ENCODE measurements at regions of chr16 and their contacts with region 1.

Region 1: GRCh38 chr16:2874912-2875362 is 8.1 kb upstream of the FLYWCH2 start:
- DNase-seq: peak; percentile 85
- CTCF ChIP-seq: peak; percentile 98

Region 2: DNA sequence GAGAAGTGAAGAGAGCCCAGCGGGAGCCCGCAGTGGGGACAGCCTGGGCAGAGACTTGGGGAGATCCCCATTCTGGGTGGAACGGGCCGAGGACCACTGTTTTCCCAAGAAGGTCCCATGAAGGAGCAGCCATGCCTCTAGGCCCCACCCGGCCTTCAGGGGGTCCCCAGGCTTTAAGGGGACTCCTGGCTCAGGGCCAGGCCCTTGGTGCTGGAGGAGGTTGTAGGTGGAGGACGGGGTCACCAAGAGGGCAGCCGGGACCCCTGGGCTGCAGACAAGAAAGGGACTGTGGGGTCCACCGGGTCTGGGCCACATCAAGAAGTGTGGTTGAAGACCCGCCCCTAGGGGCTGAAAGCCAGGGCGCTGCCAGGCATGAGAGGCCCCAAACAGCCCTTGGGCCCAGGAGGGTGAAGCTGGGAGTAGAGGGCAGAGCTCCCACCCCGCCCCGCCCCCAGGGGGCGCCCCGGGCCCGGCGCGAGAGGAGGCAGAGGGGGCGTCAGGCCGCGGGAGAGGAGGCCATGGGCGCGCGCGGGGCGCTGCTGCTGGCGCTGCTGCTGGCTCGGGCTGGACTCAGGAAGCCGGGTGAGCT is 58.1 kb before region 1 on chr16 and contains the start of gene PRSS21:
- CTCF ChIA-PET with region 1: no interaction called
- POLR2A ChIA-PET with region 1: no interaction called
- DNase-seq: no peak
- CTCF ChIP-seq: peak; percentile 28

Region 3: DNA sequence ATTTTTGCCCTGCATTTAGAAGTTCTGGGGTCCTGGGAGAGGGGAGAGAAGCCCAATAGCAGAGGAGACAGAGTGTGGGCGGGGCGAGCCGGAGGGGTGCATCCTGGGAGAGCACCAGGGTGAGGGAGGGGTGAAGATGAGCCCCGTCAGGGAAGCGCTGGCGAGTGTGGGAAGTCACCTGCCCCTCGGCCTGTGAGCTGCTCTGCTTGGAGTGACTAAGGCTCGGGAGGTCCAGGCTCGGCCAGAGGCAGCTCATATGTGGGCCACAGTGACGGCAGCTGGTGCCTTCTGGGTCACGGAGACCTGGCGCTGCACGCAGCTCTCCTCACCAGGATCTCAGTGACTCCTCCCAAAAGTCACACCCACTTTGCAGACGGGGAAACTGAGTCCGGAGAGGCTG is 43.7 kb before region 1 on chr16:
- CTCF ChIA-PET with region 1: no interaction called
- POLR2A ChIA-PET with region 1: no interaction called
- DNase-seq: no peak
- CTCF ChIP-seq: no peak

Region 4: DNA sequence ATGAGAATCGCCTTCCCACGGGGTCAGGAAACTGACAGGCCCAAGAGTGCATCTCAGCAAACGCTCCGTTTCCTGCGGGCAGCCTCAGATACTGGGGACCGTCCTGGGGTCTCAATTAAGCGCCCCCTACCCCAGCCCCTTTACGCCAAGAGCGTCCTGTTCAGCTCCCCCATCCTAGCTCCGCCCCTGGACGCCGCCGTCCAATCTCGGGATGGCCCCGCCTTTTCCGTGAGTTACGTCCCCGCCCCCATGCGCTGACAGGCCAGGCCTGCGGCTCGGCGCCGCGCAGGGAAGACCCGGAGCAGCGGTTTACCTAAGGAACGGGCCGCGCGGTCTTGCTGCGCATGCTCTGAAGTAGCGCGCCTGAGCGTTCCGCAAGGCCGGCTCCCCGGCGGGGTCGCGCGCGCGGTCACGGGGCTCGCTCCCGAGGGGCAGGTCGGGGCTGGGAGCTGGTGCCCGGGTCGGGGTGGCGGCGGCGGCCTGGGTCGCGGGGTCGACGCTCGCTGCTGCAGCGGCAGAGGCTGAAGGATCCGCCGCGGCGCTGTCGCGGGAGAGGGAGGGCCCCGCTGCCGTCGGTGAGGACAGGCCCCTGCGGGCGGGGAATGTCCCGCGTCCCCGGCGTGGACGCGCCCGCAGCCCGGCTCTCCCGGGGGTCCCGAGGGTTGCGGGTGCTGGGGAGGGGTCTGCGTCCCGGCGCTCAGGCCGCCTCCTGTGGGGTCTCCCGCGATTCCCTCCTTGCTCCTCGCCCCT is 36.8 kb after region 1 on chr16 and contains the start of gene FLYWCH1:
- CTCF ChIA-PET with region 1: interaction called, 11 read pairs
- POLR2A ChIA-PET with region 1: no interaction called
- DNase-seq: peak; percentile 96
- CTCF ChIP-seq: no peak

Region 5: GRCh38 chr16:2919511-2920255 is 44.7 kb after region 1 on chr16:
- CTCF ChIA-PET with region 1: interaction called, 12 read pairs
- POLR2A ChIA-PET with region 1: no interaction called
- DNase-seq: peak; percentile 60
- CTCF ChIP-seq: peak; percentile 82

Measured in GM10248 (cell line).